ENCODE measurements at regions of chr2 and their contacts with region 1.

Region 1: DNA sequence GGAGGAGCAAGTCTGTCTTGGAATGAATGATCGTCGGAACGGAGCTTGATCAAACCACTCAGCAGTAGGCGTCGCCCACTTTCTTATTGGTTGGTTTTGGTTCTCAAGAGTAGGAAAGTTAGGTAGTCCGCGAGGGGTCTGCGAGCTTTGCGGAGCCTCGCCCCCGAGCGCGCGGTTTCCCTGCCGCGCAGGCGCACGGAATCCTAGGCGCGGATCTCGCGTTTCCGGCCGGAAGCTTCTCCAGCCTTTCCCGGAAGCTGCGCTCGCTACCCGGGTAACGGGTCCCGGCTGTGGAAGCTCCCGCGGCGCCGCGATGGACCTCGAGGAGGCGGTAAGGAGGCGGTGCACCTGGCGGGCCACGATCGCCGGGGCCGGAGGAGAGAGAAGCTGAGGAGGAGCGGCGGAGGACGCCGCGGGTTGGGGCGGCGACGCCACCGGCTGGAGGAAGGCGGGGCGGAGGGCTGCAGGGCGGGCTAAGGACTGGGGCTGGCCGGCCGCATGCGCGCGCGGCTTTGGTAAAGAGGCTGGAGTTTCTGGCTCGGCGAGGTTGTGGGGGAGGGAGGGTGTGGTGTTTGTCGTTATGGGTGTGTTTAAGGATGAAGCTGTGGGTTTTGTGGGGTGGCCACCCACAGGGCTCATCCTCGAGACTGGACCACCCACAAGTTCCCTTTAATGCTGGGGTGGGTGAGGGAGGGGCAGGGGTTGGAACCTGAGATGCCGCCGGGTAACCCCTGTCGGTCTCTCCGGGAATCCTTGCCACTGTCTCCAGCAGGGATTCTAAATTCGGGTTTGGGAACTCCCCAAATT is at the start of gene TAF1B:
- DNase-seq: peak; percentile 96
- H3K4me3 ChIP-seq: peak within 1 kb of the TSS; percentile 58 to 93 (median 85)
- H3K27ac ChIP-seq: peak within 1 kb of the TSS; percentile 79 to 90 (median 86)
- H3K4me1 ChIP-seq: peaks cover 12 to 47% (median 28%) of the 10 kb centered on the region in 6 donors
- H3K27me3 ChIP-seq: no peaks in the 10 kb centered on the region
- CTCF ChIP-seq: peak in 3 of 11 experiments; percentile 17 to 46 (median 30)
- POLR2A ChIP-seq: peak in 2 of 3 donors; percentile 51 to 77
- total RNA-seq, gene TAF1B: 11.5 to 26.5 (median 19.1) TPM

Region 2: GRCh38 chr2:9941196-9941995 is 98.0 kb after region 1 on chr2:
- intact Hi-C with region 1: loop called (anchors 10 kb)
- DNase-seq: no peak
- H3K4me3 ChIP-seq: no peak overlapping the region
- H3K27ac ChIP-seq: no peak overlapping the region
- H3K4me1 ChIP-seq: no peaks in the 10 kb centered on the region
- H3K27me3 ChIP-seq: peaks cover 0 to 26% (median 2%) of the 10 kb centered on the region in 7 donors
- CTCF ChIP-seq: no peak
- POLR2A ChIP-seq: no peak

Measured in spleen (tissue), 13 donors.